GM10248 (cell line): ENCODE measurements at regions of chr10 and their contacts with region 1.

Region 1: GRCh38 chr10:132665946-132666704 is 119.8 kb downstream of the NKX6-2 start:
- DNase-seq: no peak
- CTCF ChIP-seq: no peak

Region 2: DNA sequence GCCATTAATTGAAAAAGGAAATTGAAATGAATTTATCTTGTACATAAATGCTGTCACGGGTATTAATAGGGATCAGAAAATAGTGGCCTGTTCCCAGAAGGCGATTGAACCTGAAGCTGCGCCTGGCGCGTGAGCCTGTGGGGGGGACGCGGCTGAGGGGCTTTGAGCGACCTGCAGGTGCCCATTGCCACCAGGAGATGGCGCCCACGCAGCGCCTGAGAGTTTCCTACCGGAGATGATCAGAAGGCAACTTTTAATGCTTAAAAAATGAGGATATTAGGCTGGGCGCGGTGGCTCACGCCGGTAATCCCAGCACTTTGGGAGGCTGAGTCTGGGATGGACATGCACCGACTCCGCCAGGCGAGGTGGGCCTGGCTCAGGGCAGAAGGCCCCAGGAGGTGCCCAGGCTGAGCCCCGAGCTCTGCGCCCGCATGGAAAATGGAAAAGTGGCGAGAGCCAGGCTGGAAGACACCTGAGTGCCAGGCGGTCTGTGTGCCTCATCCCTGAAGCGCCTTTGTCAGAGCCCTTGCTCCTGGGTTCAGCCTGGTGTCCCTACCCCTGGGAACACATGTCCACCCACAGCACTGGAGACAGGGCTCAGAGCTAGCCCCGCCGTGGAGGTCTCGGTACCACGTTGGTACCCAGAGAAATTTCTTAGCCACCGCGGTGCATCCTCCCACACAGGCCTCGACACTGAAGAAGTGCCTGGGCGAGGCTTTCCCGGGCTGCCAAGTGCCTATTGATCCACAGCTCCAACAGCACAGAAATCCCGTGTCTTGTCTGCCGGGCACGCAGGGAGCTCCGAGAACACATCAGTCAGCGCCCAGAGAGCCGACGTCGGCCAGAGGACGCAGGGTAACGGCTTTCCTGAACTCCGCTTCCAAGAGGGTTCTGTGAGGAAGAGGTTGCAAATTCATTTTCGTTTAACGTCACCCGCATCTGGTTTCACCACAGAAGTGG is 11.1 kb before region 1 on chr10:
- CTCF ChIA-PET with region 1: interaction called, 18 read pairs
- POLR2A ChIA-PET with region 1: no interaction called
- DNase-seq: peak; percentile 84
- CTCF ChIP-seq: peak; percentile 88